ENCODE measurements at regions of chr3 and their contacts with region 1.

Region 1: DNA sequence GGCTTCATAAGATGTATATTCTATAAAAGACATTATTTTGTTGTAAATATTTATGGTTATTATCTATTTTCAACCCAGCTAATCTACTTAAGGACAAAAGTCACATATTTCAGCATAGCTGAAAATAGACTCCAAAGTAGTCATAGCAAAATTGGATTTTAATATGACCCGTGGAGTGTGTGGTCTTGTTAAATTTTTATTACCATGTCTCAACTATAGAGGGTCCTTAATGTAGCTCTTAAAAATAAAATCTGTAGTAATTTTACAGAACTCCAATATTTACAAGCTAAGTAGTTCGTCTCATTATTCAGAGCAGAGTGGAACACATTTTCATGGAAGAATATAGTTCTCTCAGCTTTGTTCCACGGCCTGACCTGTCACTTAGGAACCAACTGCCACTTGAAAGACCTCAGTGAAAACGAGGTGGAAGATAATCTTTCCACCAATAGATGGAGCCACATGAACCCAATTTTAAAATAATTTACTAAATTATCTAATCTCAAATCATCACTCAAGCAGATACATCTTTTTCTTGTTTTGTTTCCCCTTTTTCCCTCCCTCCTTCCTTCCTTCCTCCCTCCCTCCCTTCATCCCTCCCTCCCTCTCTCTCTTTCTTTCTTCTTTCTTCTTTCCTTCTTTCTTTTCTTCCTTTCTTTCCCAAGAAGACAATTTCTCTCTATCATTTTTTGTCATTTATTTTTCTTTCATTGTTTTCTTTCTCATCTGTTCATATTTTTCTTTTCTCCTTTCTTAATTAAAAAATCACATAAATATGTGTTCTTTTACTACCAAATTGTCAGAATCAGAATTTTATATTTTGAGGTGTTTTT is 97.2 kb downstream of the CLDN1 start:
- H3K4me3 Mint-ChIP-seq: no peak overlapping the region
- H3K27ac Mint-ChIP-seq: no peak overlapping the region
- H3K4me1 Mint-ChIP-seq: peaks cover 23% of the 10 kb centered on the region
- H3K27me3 Mint-ChIP-seq: peaks cover 17% of the 10 kb centered on the region

Region 2: GRCh38 chr3:190366145-190366544 is 141.1 kb after region 1 on chr3:
- intact Hi-C with region 1: no loop called
- H3K4me3 Mint-ChIP-seq: no peak overlapping the region
- H3K27ac Mint-ChIP-seq: no peak overlapping the region
- H3K4me1 Mint-ChIP-seq: no peaks in the 10 kb centered on the region
- H3K27me3 Mint-ChIP-seq: no peaks in the 10 kb centered on the region

Region 3: DNA sequence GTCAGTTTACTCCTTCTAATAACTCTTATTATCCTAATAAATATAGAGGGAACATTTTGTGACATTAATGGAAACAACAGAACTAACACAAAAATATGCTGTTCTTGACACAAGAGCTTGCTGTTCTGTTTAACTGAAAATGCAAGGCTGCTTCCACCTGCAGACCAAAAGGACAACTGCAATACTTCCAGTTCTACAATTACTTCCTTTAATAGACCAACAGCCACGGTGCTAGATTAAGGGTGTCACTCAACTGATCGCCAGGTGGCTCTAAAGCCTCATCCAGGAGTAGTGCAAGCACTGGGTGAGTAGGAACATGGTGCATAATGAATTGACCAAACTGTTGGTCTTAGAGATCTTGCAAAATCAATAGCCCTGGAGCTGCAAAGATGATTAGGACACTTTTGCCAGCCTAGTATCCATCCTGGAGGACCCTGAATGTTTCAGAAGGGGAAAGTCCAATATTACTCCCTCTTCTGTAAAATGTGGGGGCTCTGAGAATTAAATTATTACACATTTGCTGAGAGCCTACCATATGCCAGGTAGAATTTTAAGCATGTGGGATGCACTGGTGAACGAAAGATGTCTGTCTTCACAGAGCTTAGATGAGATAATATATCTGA is 159.3 kb after region 1 on chr3:
- intact Hi-C with region 1: loop called (anchors 2 kb)
- H3K4me3 Mint-ChIP-seq: no peak overlapping the region
- H3K27ac Mint-ChIP-seq: no peak overlapping the region
- H3K4me1 Mint-ChIP-seq: no peaks in the 10 kb centered on the region
- H3K27me3 Mint-ChIP-seq: no peaks in the 10 kb centered on the region

Region 4: DNA sequence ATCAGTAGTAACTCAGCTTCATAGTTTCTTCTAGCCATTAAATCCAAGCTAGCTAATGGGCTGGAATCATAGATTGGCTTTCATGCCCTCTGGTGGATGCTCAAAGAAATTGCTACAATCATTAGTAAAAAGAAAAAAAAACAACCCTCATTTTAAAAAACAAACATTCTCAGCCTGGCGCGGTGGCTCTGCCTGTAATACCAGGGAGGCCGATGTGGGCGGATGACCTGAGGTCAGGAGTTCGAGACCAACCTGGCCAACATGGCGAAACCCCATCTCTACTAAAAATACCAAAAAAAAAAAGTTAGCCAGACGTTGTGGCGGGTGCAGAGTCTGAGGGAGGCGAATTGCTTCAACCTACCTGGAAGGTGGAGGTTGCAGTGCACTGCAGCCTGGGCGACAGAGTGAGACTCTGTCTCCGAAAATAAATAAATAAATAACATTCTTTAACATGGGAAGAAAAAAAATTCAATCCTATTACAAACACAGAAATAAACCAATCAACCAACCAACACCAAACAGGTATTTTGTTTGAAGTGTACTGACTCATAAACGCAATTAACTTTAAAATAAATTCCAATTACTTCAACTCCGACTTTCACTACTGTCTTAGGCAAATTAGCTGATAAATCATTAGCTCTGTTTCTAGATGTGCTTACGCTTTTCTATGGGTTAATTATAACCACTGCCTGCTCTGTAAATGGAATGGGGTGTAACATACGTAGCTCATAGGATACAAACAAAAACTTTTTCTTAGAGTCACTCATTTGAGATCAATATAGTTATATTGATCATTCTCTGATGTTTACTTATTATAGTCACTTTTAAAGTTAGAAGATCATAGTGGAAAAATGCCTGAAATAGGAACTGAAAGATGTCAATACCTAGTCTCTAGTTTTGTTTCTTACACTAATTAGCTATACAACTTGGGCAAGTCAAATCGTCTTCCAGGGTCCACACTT is 199.7 kb after region 1 on chr3:
- intact Hi-C with region 1: loop called (anchors 1 kb)
- H3K4me3 Mint-ChIP-seq: peak overlapping the region; percentile 34
- H3K27ac Mint-ChIP-seq: no peak overlapping the region
- H3K4me1 Mint-ChIP-seq: no peaks in the 10 kb centered on the region
- H3K27me3 Mint-ChIP-seq: peaks cover 2% of the 10 kb centered on the region

Region 5: DNA sequence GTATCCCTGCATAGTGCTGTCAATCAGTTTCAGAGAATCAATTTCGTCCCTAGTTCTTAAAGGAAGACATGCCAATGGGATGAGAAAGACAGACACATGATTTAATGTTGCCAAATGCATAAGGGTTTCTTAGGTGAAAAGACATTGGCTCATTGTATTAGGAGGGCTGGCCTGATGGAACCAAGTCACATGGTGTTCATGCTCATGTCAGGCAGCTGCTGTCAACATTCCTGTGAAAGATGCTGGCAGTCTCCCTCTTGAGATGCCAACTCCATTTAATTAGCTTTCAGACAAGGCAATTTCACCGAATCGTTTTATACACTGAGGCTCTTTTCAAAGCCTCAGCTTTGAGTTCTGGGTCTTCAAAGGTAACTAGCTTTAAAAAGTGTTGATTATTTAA is 272.7 kb after region 1 on chr3:
- intact Hi-C with region 1: loop called (anchors 5 kb)
- H3K4me3 Mint-ChIP-seq: no peak overlapping the region
- H3K27ac Mint-ChIP-seq: no peak overlapping the region
- H3K4me1 Mint-ChIP-seq: peaks cover 40% of the 10 kb centered on the region
- H3K27me3 Mint-ChIP-seq: peaks cover 2% of the 10 kb centered on the region

Region 6: DNA sequence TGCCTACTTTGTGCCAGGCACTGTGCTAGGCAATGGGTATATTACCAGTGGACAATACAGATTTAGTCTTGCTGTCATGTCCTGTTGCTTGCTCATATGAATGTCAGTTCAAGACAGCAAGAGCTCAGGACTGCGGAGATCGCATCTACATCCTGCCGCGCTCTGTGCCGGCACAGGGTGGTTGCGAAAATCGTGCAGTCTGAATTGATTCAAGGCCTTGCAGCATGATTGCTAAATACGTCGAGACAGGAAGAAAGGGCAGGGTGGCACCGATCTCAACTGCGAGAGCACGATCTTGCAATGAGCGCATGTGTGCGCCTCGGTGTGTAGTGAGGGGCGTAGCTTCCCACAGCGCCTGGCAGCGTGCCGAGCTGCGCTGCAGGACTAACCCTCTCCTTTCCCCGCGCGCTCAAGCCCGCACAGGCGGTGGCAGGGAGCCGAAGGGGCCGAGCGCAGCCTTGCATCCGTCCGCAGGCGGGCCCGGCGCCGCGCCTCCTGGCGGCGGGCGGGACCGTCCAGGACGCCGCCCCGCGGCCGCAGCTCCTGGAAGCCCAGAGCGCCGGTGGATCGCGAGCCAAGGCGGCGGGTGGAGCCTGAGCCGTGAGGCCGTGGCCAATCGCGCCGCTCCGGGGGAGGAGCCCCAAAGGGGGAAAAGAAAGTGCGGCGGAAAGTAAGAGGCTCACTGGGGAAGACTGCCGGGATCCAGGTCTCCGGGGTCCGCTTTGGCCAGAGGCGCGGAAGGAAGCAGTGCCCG is 288.5 kb after region 1 on chr3 and contains the start of gene IL1RAP:
- intact Hi-C with region 1: loop called (anchors 5 kb)
- H3K4me3 Mint-ChIP-seq: peak within 1 kb of the TSS; percentile 92
- H3K27ac Mint-ChIP-seq: peak within 1 kb of the TSS; percentile 90
- H3K4me1 Mint-ChIP-seq: peaks cover 46% of the 10 kb centered on the region
- H3K27me3 Mint-ChIP-seq: no peaks in the 10 kb centered on the region

Region 7: DNA sequence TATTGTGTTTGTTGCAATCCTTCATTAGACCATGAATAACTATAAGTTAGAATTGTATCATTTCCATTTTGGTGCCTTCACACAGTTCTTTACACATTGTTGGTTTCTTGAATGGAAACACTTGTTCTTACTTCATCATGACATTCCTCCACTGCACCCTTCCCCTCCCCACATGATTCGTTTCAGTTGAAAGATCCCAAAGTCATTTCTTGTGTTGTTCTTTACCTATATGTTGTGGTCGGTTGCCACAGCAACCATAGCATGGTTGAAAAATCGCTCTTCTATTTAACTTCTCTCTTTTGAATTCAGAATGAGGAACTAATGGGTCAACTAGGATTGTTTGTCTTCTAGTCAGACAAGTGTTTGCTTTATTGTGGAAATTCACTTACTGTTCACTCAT is 392.1 kb after region 1 on chr3:
- intact Hi-C with region 1: loop called (anchors 5 kb)
- H3K4me3 Mint-ChIP-seq: no peak overlapping the region
- H3K27ac Mint-ChIP-seq: peak overlapping the region; percentile 80
- H3K4me1 Mint-ChIP-seq: peaks cover 58% of the 10 kb centered on the region
- H3K27me3 Mint-ChIP-seq: no peaks in the 10 kb centered on the region

Region 8: GRCh38 chr3:190701096-190701532 is 476.0 kb after region 1 on chr3:
- intact Hi-C with region 1: loop called (anchors 5 kb)
- H3K4me3 Mint-ChIP-seq: no peak overlapping the region
- H3K27ac Mint-ChIP-seq: no peak overlapping the region
- H3K4me1 Mint-ChIP-seq: peaks cover 12% of the 10 kb centered on the region
- H3K27me3 Mint-ChIP-seq: peaks cover 1% of the 10 kb centered on the region